B cell (primary cell): ENCODE measurements at regions of chr16 and their contacts with region 1.

Region 1: GRCh38 chr16:30602616-30603277 is 7.4 kb downstream of the ZNF689 start:
- DNase-seq: no peak
- ATAC-seq: no peak
- H3K4me3 ChIP-seq: no peak overlapping the region
- H3K4me3 Mint-ChIP-seq: no peak overlapping the region
- H3K27ac ChIP-seq: no peak overlapping the region
- H3K27ac Mint-ChIP-seq: no peak overlapping the region
- H3K4me1 ChIP-seq: no peaks in the 10 kb centered on the region
- H3K4me1 Mint-ChIP-seq: peaks cover 3% of the 10 kb centered on the region
- H3K27me3 ChIP-seq: no peaks in the 10 kb centered on the region
- H3K27me3 Mint-ChIP-seq: no peaks in the 10 kb centered on the region
- CTCF ChIP-seq: no peak

Region 2: GRCh38 chr16:30407102-30407803 is 195.5 kb before region 1 on chr16 and contains the start of gene ZNF771:
- CTCF ChIA-PET with region 1: interaction called, 17 read pairs
- POLR2A ChIA-PET with region 1: interaction called, 4 read pairs
- intact Hi-C with region 1: no loop called
- DNase-seq: peak; percentile 94
- ATAC-seq: peak; percentile 91
- H3K4me3 ChIP-seq: peak within 1 kb of the TSS; percentile 42 to 76 (median 66)
- H3K4me3 Mint-ChIP-seq: peak within 1 kb of the TSS; percentile 98
- H3K27ac ChIP-seq: peak within 1 kb of the TSS; percentile 42 to 57
- H3K27ac Mint-ChIP-seq: peak within 1 kb of the TSS; percentile 96
- H3K4me1 ChIP-seq: peaks cover 15 to 23% of the 10 kb centered on the region in 2 donors
- H3K4me1 Mint-ChIP-seq: peaks cover 21% of the 10 kb centered on the region
- H3K27me3 ChIP-seq: no peaks in the 10 kb centered on the region
- H3K27me3 Mint-ChIP-seq: peaks cover 3% of the 10 kb centered on the region
- CTCF ChIP-seq: no peak
- total RNA-seq, gene ZNF771: 6.6 and 8.3 TPM in 2 replicates

Region 3: GRCh38 chr16:30534368-30535105 is 68.2 kb before region 1 on chr16 and contains the start of gene ZNF747:
- CTCF ChIA-PET with region 1: interaction called, 6 read pairs
- POLR2A ChIA-PET with region 1: interaction called, 3 read pairs
- intact Hi-C with region 1: loop called (anchors 1 kb)
- DNase-seq: peak; percentile 93
- ATAC-seq: peak; percentile 82
- H3K4me3 ChIP-seq: peak within 1 kb of the TSS; percentile 80 to 93 (median 88)
- H3K4me3 Mint-ChIP-seq: peak within 1 kb of the TSS; percentile 98
- H3K27ac ChIP-seq: peak within 1 kb of the TSS; percentile 89 to 94
- H3K27ac Mint-ChIP-seq: peak within 1 kb of the TSS; percentile 94
- H3K4me1 ChIP-seq: peaks cover 8 to 23% of the 10 kb centered on the region in 2 donors
- H3K4me1 Mint-ChIP-seq: peaks cover 33% of the 10 kb centered on the region
- H3K27me3 ChIP-seq: no peaks in the 10 kb centered on the region
- H3K27me3 Mint-ChIP-seq: no peaks in the 10 kb centered on the region
- CTCF ChIP-seq: no peak
- total RNA-seq, gene ZNF747: 17.3 and 27.1 TPM in 2 replicates

Region 4: DNA sequence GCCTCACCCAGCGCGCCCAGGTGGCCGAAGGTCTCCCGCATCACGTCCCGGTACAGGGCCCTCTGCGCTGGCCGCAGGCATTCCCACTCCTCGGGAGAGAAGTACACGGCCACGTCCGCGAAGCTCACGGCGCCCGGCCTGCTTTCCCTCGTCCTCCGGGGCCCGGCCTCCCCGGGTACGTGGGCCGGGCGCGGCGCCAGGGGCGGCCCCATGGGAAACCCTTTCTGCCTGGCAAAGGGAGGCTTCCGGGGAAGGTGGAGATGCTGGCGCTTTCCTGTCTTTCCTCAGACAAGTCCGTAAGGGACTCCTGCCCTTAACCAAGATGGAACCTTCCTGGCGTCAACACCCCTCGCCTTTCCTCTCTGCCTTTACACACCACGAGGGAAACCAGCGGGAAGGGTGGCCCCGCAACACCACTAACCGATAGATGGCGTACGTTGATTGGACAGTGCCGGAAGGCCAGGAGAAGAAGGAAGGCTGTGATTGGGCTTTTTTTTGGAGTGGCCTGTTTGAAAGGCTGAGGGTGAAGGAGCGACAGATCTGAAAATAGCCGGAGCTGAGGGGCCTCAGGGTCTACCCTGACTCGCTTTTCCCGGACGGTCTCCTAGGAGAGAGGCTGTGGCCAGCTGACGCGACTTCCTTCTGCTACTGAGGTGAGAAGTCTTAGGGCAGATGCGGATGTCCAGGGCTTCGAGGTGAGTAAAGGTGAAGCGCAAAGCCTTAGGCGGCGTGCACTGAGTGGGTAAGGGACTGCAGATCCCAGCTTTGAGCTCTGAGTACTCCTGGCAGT is 17.2 kb before region 1 on chr16 and contains the start of gene ZNF785:
- CTCF ChIA-PET with region 1: interaction called, 14 read pairs
- POLR2A ChIA-PET with region 1: interaction called, 3 read pairs
- intact Hi-C with region 1: no loop called
- DNase-seq: peak; percentile 95
- ATAC-seq: peak; percentile 99
- H3K4me3 ChIP-seq: peak within 1 kb of the TSS; percentile 56 to 89 (median 75)
- H3K4me3 Mint-ChIP-seq: peak within 1 kb of the TSS; percentile 85
- H3K27ac ChIP-seq: peak within 1 kb of the TSS; percentile 29 to 82
- H3K27ac Mint-ChIP-seq: peak within 1 kb of the TSS; percentile 71
- H3K4me1 ChIP-seq: peaks cover 8 to 21% of the 10 kb centered on the region in 2 donors
- H3K4me1 Mint-ChIP-seq: peaks cover 22% of the 10 kb centered on the region
- H3K27me3 ChIP-seq: no peaks in the 10 kb centered on the region
- H3K27me3 Mint-ChIP-seq: no peaks in the 10 kb centered on the region
- CTCF ChIP-seq: no peak
- total RNA-seq, gene ZNF785: 39.7 and 44.6 TPM in 2 replicates

Region 5: DNA sequence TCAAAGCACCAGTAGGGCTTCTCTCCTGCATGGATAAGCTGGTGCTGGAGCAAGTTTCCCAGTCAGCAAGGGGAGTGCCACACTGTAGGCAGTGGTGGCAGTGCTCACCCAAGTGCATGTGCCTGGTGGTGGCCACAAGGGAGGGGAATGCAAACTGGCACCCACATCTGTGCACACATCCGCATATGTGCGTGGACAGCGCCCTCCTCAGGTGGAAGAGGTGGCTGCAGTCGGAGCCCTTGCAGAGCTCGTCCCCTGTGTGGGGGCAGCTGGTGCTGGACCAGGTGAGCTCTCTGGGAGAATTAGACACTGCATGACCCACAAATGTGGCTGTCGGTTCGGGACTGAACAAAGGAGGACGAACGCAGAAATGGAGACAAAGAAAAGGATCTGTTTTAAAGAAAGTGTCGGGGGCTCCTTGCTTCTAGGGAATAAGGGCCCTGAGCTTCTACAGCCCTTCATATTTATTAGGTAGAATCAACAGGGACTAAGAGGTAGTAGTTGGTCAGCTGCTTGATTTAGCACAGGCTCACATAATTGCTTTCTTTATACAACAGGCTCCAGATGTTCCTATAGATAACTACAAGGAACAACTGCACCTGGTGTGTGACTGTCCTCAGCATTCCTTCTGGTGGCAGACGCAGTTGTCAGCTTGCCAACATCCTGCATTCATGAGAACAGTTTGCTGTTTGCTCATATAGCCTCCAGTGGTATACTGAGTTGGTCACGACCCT is 12.8 kb after region 1 on chr16:
- CTCF ChIA-PET with region 1: interaction called, 13 read pairs
- POLR2A ChIA-PET with region 1: interaction called, 4 read pairs
- intact Hi-C with region 1: no loop called
- DNase-seq: peak; percentile 68
- ATAC-seq: peak; percentile 64
- H3K4me3 ChIP-seq: no peak overlapping the region
- H3K4me3 Mint-ChIP-seq: no peak overlapping the region
- H3K27ac ChIP-seq: no peak overlapping the region
- H3K27ac Mint-ChIP-seq: no peak overlapping the region
- H3K4me1 ChIP-seq: peaks cover 5 to 12% of the 10 kb centered on the region in 2 donors
- H3K4me1 Mint-ChIP-seq: peaks cover 9% of the 10 kb centered on the region
- H3K27me3 ChIP-seq: no peaks in the 10 kb centered on the region
- H3K27me3 Mint-ChIP-seq: peaks cover 6% of the 10 kb centered on the region
- CTCF ChIP-seq: peak; percentile 73

Region 6: DNA sequence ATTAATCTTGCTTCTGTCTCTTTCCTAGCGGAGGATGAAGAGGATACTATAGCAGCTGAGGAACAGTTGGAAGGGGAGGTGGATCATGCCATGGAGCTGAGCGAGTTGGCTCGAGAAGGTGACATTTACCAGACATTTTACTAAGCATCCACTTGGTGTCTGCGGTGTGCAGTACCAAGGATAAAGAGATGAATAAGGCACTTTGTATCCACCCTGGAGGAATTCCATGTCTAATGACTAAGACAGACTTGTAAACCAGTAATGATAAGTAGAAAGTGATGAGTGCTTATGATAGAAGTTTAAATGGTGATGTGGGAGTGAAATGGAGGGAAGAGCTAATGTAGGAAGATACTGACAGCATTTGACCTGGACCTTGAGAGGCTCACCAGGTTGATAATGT is 108.2 kb after region 1 on chr16:
- CTCF ChIA-PET with region 1: no interaction called
- POLR2A ChIA-PET with region 1: no interaction called
- intact Hi-C with region 1: no loop called
- DNase-seq: no peak
- ATAC-seq: no peak
- H3K4me3 ChIP-seq: no peak overlapping the region
- H3K4me3 Mint-ChIP-seq: no peak overlapping the region
- H3K27ac ChIP-seq: no peak overlapping the region
- H3K27ac Mint-ChIP-seq: no peak overlapping the region
- H3K4me1 ChIP-seq: peaks cover 5 to 9% of the 10 kb centered on the region in 2 donors
- H3K4me1 Mint-ChIP-seq: peaks cover 11% of the 10 kb centered on the region
- H3K27me3 ChIP-seq: no peaks in the 10 kb centered on the region
- H3K27me3 Mint-ChIP-seq: no peaks in the 10 kb centered on the region
- CTCF ChIP-seq: no peak